B cell (primary cell): ENCODE measurements at regions of chr5 and their contacts with region 1.

Region 1: GRCh38 chr5:150560401-150561193 is 52.7 kb downstream of the NDST1 start:
- DNase-seq: peak; percentile 87
- ATAC-seq: peak; percentile 96
- H3K4me3 ChIP-seq: no peak overlapping the region
- H3K4me3 Mint-ChIP-seq: no peak overlapping the region
- H3K27ac ChIP-seq: no peak overlapping the region
- H3K27ac Mint-ChIP-seq: no peak overlapping the region
- H3K4me1 ChIP-seq: peaks cover 5 to 6% of the 10 kb centered on the region in 2 donors
- H3K4me1 Mint-ChIP-seq: peaks cover 5% of the 10 kb centered on the region
- H3K27me3 ChIP-seq: no peaks in the 10 kb centered on the region
- H3K27me3 Mint-ChIP-seq: no peaks in the 10 kb centered on the region
- CTCF ChIP-seq: peak; percentile 93

Region 2: DNA sequence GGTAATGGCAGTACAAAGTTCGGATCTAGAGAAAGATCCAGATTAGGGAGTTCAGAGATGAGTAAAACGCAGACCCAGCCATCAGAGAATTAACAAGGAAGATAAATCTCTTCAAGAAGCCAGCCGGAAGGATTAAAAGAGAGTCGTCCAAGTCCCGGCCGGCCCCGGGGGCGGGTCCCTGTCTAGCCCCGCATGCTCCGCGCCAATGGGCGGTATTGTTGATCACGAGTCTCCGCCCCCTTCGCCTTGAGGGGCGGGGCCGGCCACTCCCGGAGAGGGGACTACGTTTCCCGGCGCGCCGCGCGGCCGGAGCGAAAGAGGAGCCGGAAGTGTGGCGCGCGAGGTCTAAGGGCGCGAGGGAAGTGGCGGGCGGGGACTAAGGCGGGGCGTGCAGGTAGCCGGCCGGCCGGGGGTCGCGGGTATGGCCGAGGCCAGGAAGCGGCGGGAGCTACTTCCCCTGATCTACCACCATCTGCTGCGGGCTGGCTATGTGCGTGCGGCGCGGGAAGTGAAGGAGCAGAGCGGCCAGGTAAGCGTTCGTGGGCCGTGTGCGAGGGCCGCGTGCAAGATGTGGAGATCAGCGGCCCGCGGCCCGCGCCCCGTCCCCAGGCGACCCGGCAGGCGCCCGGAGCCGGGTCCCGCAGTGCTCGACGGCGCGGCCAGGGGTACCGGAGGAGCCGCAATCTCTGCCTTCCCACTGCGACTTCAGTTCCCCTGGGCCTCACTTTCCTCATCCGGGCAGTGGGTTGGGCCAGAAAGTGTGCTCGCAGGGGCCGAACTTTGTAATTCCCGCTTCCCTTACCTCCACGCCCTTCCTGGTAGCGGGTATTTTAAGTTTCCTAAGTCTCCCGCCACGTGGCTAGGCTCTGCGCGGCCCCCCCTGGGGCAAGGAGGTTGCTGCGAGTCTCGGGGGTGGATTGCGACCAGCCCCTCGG is 203.0 kb before region 1 on chr5 and contains the start of gene TCOF1:
- CTCF ChIA-PET with region 1: no interaction called
- POLR2A ChIA-PET with region 1: no interaction called
- intact Hi-C with region 1: loop called (anchors 10 kb)
- DNase-seq: peak; percentile 97
- ATAC-seq: peak; percentile 99
- H3K4me3 ChIP-seq: peak within 1 kb of the TSS; percentile 53 to 77 (median 69)
- H3K4me3 Mint-ChIP-seq: peak within 1 kb of the TSS; percentile 90
- H3K27ac ChIP-seq: peak within 1 kb of the TSS; percentile 23 to 68
- H3K27ac Mint-ChIP-seq: peak within 1 kb of the TSS; percentile 88
- H3K4me1 ChIP-seq: peaks cover 35 to 54% of the 10 kb centered on the region in 2 donors
- H3K4me1 Mint-ChIP-seq: peaks cover 50% of the 10 kb centered on the region
- H3K27me3 ChIP-seq: no peaks in the 10 kb centered on the region
- H3K27me3 Mint-ChIP-seq: no peaks in the 10 kb centered on the region
- CTCF ChIP-seq: no peak
- total RNA-seq, gene TCOF1: 62.4 and 66.5 TPM in 2 replicates

Region 3: GRCh38 chr5:150544611-150545219 is 15.9 kb before region 1 on chr5:
- CTCF ChIA-PET with region 1: interaction called, 14 read pairs
- POLR2A ChIA-PET with region 1: no interaction called
- intact Hi-C with region 1: no loop called
- DNase-seq: peak; percentile 77
- ATAC-seq: peak; percentile 99
- H3K4me3 ChIP-seq: no peak overlapping the region
- H3K4me3 Mint-ChIP-seq: no peak overlapping the region
- H3K27ac ChIP-seq: no peak overlapping the region
- H3K27ac Mint-ChIP-seq: no peak overlapping the region
- H3K4me1 ChIP-seq: peaks cover 0 to 4% of the 10 kb centered on the region in 2 donors
- H3K4me1 Mint-ChIP-seq: peaks cover 1% of the 10 kb centered on the region
- H3K27me3 ChIP-seq: no peaks in the 10 kb centered on the region
- H3K27me3 Mint-ChIP-seq: no peaks in the 10 kb centered on the region
- CTCF ChIP-seq: peak; percentile 80

Region 4: GRCh38 chr5:150656191-150657132 is 95.9 kb after region 1 on chr5:
- CTCF ChIA-PET with region 1: interaction called, 110 read pairs
- POLR2A ChIA-PET with region 1: no interaction called
- intact Hi-C with region 1: loop called (anchors 1 kb)
- DNase-seq: peak; percentile 89
- ATAC-seq: peak; percentile 91
- H3K4me3 ChIP-seq: peak overlapping the region; percentile 21 to 69 (median 59)
- H3K4me3 Mint-ChIP-seq: peak overlapping the region; percentile 81
- H3K27ac ChIP-seq: no peak overlapping the region
- H3K27ac Mint-ChIP-seq: peak overlapping the region; percentile 84
- H3K4me1 ChIP-seq: peaks cover 10 to 15% of the 10 kb centered on the region in 2 donors
- H3K4me1 Mint-ChIP-seq: peaks cover 19% of the 10 kb centered on the region
- H3K27me3 ChIP-seq: no peaks in the 10 kb centered on the region
- H3K27me3 Mint-ChIP-seq: peaks cover 4% of the 10 kb centered on the region
- CTCF ChIP-seq: peak; percentile 77

Region 5: GRCh38 chr5:150710165-150710564 is 149.6 kb after region 1 on chr5:
- CTCF ChIA-PET with region 1: interaction called, 5 read pairs
- POLR2A ChIA-PET with region 1: no interaction called
- intact Hi-C with region 1: loop called (anchors 1 kb)
- DNase-seq: peak; percentile 31
- ATAC-seq: no peak
- H3K4me3 ChIP-seq: no peak overlapping the region
- H3K4me3 Mint-ChIP-seq: no peak overlapping the region
- H3K27ac ChIP-seq: no peak overlapping the region
- H3K27ac Mint-ChIP-seq: no peak overlapping the region
- H3K4me1 ChIP-seq: no peaks in the 10 kb centered on the region
- H3K4me1 Mint-ChIP-seq: no peaks in the 10 kb centered on the region
- H3K27me3 ChIP-seq: no peaks in the 10 kb centered on the region
- H3K27me3 Mint-ChIP-seq: no peaks in the 10 kb centered on the region
- CTCF ChIP-seq: peak; percentile 15

Region 6: GRCh38 chr5:151499501-151500035 is 939.0 kb after region 1 on chr5:
- CTCF ChIA-PET with region 1: no interaction called
- POLR2A ChIA-PET with region 1: no interaction called
- intact Hi-C with region 1: loop called (anchors 2 kb)
- DNase-seq: no peak
- ATAC-seq: no peak
- H3K4me3 ChIP-seq: no peak overlapping the region
- H3K4me3 Mint-ChIP-seq: no peak overlapping the region
- H3K27ac ChIP-seq: no peak overlapping the region
- H3K27ac Mint-ChIP-seq: no peak overlapping the region
- H3K4me1 ChIP-seq: peaks cover 0 to 6% of the 10 kb centered on the region in 2 donors
- H3K4me1 Mint-ChIP-seq: peaks cover 4% of the 10 kb centered on the region
- H3K27me3 ChIP-seq: no peaks in the 10 kb centered on the region
- H3K27me3 Mint-ChIP-seq: no peaks in the 10 kb centered on the region
- CTCF ChIP-seq: no peak